ENCODE measurements at regions of chr7 and their contacts with region 1.

Region 1: DNA sequence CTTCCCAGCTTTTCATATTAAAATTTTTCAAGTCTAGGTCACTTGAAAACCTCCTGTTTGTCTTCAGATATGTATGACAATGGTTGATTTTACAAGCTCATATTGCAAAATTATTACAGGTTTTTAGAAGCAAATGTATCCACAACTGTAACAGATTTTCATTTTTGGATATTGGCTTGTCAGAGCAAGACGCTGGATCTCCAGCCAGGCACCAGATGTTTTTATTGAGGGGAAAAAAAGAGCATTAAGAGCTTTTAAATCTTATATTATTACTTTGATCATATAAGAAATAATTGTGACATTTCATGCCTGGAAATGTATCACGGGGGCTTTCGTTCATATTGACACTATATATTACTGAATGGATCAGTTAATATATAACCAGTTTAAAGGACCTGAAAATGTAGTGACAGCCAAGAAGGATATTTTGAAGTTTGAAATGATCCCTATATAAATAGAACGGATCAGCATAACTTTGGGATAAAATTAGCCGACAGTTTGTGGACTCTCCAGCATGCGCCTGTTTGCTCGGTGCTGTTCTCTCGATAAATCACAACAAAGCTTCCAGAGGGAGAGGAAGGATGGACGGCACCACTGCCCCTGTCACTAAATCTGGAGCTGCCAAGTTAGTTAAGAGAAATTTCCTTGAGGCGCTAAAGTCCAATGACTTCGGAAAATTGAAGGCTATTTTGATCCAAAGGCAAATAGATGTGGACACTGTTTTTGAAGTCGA is at the start of gene ASB4:
- DNase-seq: no peak
- ATAC-seq: no peak
- H3K4me3 ChIP-seq: no peak within 1 kb of the TSS
- H3K4me3 Mint-ChIP-seq: no peak within 1 kb of the TSS
- H3K27ac ChIP-seq: no peak within 1 kb of the TSS
- H3K27ac Mint-ChIP-seq: no peak within 1 kb of the TSS
- H3K4me1 ChIP-seq: no peaks in the 10 kb centered on the region
- H3K4me1 Mint-ChIP-seq: no peaks in the 10 kb centered on the region
- H3K27me3 ChIP-seq: no peaks in the 10 kb centered on the region
- H3K27me3 Mint-ChIP-seq: no peaks in the 10 kb centered on the region
- CTCF ChIP-seq: no peak
- total RNA-seq, gene ASB4: not detected

Region 2: DNA sequence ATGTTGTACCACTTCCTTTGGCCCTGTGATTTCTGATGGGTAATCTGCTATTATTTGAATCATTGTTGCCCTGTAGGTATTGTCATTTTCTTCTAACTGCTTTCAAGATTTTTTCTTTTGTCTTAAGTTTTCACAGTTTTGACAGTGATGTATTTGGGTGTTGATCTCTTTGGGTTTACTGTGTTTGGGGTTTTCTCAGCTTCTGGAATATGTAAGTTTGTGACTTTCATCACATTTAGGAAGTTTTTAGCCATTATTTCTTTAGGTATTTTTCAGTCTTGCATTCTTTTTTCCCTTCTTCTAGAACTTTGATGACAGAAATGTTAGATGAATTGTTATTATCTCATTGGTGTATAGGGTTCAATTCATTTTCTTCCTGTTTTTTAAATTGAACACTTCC is 27.6 kb before region 1 on chr7:
- CTCF ChIA-PET with region 1: no interaction called
- POLR2A ChIA-PET with region 1: no interaction called
- intact Hi-C with region 1: loop called (anchors 1 kb)
- DNase-seq: no peak
- ATAC-seq: no peak
- H3K4me3 ChIP-seq: no peak overlapping the region
- H3K4me3 Mint-ChIP-seq: no peak overlapping the region
- H3K27ac ChIP-seq: no peak overlapping the region
- H3K27ac Mint-ChIP-seq: no peak overlapping the region
- H3K4me1 ChIP-seq: no peaks in the 10 kb centered on the region
- H3K4me1 Mint-ChIP-seq: no peaks in the 10 kb centered on the region
- H3K27me3 ChIP-seq: no peaks in the 10 kb centered on the region
- H3K27me3 Mint-ChIP-seq: peaks cover 27% of the 10 kb centered on the region
- CTCF ChIP-seq: no peak

Measured in CD8-positive, alpha-beta T cell (primary cell).